Endothelial cell of umbilical vein (primary cell): ENCODE measurements at regions of chr1 and their contacts with region 1.

Region 1: GRCh38 chr1:25829046-25829445 is 9.3 kb downstream of the MTFR1L start:
- DNase-seq: no peak
- H3K4me3 ChIP-seq: no peak overlapping the region
- H3K27ac ChIP-seq: no peak overlapping the region
- H3K4me1 ChIP-seq: peaks cover 5% of the 10 kb centered on the region
- H3K27me3 ChIP-seq: no peaks in the 10 kb centered on the region
- CTCF ChIP-seq: no peak
- POLR2A ChIP-seq: no peak

Region 2: GRCh38 chr1:25599969-25600610 is 229.0 kb before region 1 on chr1:
- CTCF ChIA-PET with region 1: no interaction called
- POLR2A ChIA-PET with region 1: no interaction called
- dilution Hi-C with region 1: no loop called
- intact Hi-C with region 1: no loop called
- DNase-seq: no peak
- H3K4me3 ChIP-seq: no peak overlapping the region
- H3K27ac ChIP-seq: no peak overlapping the region
- H3K4me1 ChIP-seq: no peaks in the 10 kb centered on the region
- H3K27me3 ChIP-seq: peaks cover 0 to 5% of the 10 kb centered on the region in 2 experiments
- CTCF ChIP-seq: no peak
- POLR2A ChIP-seq: no peak

Region 3: DNA sequence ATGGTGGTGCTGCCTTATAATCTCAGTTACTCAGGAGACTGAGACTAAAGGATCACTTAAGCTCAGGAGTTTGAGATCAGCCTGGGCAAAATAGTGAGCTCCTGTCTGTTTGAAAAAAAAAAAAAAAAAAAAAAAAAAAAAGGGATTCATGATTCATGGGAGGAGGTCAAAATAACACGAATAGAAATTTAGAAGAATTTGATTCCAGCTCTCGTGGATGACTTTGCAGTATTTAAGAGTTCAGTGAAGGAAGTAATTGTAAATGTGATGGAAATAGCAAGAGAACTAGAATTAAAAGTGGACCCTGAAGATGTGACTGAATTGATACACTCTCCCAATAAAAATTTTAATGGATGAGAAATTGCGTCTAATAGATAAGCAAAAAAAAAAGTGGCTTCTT is 14.4 kb after region 1 on chr1:
- CTCF ChIA-PET with region 1: interaction called, 12 read pairs
- POLR2A ChIA-PET with region 1: interaction called, 3 read pairs
- dilution Hi-C with region 1: no loop called
- intact Hi-C with region 1: no loop called
- DNase-seq: no peak
- H3K4me3 ChIP-seq: no peak overlapping the region
- H3K27ac ChIP-seq: no peak overlapping the region
- H3K4me1 ChIP-seq: peaks cover 1% of the 10 kb centered on the region
- H3K27me3 ChIP-seq: no peaks in the 10 kb centered on the region
- CTCF ChIP-seq: no peak
- POLR2A ChIP-seq: no peak

Region 4: GRCh38 chr1:26164036-26164860 is 335.2 kb after region 1 on chr1:
- CTCF ChIA-PET with region 1: no interaction called
- POLR2A ChIA-PET with region 1: no interaction called
- dilution Hi-C with region 1: no loop called
- intact Hi-C with region 1: no loop called
- DNase-seq: peak; percentile 38
- H3K4me3 ChIP-seq: peak overlapping the region in 1 of 3 experiments; percentile 23
- H3K27ac ChIP-seq: no peak overlapping the region
- H3K4me1 ChIP-seq: peaks cover 19% of the 10 kb centered on the region
- H3K27me3 ChIP-seq: no peaks in the 10 kb centered on the region
- CTCF ChIP-seq: peak; percentile 58 to 88
- POLR2A ChIP-seq: no peak